ENCODE measurements at regions of chr5 and their contacts with region 1.

Region 1: DNA sequence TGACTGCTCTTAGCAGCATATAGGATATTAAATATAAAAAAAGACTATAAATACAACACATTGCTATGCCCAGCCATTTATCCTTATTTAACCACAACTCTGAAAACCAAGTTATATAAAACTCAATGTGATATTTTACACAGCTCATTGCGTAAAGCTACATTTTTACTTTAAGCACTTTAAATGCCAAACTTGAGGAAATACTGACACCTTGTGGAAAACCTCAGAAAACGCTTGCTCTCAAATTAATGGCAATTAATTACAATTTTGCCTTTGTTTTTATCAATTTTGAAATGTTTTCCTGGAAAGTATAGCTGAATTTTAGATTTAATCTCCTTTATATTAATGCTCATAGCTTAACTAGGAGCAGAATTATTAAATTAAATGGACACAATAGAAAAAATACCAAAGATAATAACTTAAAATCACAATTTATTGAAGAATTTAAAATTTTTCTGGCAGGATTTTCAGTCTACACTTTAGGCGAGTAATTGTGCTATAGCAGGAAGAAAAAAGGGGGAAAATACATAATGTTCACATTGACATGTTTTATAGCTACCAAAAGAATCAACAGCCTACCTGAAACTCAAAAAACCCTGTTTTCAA is 25.2 kb upstream of the PLAC8L1 start:
- DNase-seq: no peak
- H3K4me3 ChIP-seq: no peak overlapping the region
- H3K27ac ChIP-seq: no peak overlapping the region
- H3K4me1 ChIP-seq: no peaks in the 10 kb centered on the region
- H3K27me3 ChIP-seq: no peaks in the 10 kb centered on the region
- CTCF ChIP-seq: peak; percentile 84
- EP300 ChIP-seq: no peak
- RAD21 ChIP-seq: peak; percentile 67

Region 2: GRCh38 chr5:146118322-146118721 is 12.2 kb before region 1 on chr5:
- CTCF ChIA-PET with region 1: interaction called, 33 read pairs
- POLR2A ChIA-PET with region 1: no interaction called
- DNase-seq: no peak
- H3K4me3 ChIP-seq: no peak overlapping the region
- H3K27ac ChIP-seq: no peak overlapping the region
- H3K4me1 ChIP-seq: peaks cover 0 to 2% of the 10 kb centered on the region in 2 experiments; a peak in 2 of 4 replicates
- H3K27me3 ChIP-seq: no peaks in the 10 kb centered on the region
- CTCF ChIP-seq: no peak
- EP300 ChIP-seq: no peak
- RAD21 ChIP-seq: no peak

Region 3: GRCh38 chr5:146151970-146152369 is 21.4 kb after region 1 on chr5:
- CTCF ChIA-PET with region 1: interaction called, 12 read pairs
- POLR2A ChIA-PET with region 1: no interaction called
- DNase-seq: no peak
- H3K4me3 ChIP-seq: no peak overlapping the region
- H3K27ac ChIP-seq: no peak overlapping the region
- H3K4me1 ChIP-seq: no peaks in the 10 kb centered on the region
- H3K27me3 ChIP-seq: no peaks in the 10 kb centered on the region
- CTCF ChIP-seq: no peak
- EP300 ChIP-seq: no peak
- RAD21 ChIP-seq: no peak

Region 4: DNA sequence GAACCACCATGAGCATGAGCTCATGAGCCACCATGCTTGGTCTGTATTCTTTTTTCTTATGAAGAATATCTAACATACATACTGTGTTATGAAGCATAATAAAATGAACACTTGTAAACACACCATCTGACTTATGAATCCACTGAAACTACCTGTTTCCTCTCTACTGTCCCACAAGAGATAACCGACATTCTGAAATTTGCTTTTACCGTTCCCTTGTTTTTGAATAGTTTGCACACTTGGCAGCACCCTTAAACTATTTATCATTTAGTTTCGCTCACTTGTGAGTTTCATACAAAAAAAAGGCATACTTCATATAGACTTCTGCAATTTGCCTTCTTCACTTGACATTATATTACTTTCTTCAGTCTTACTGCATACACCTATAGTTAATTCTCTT is 43.1 kb after region 1 on chr5:
- CTCF ChIA-PET with region 1: interaction called, 15 read pairs
- POLR2A ChIA-PET with region 1: no interaction called
- DNase-seq: no peak
- H3K4me3 ChIP-seq: no peak overlapping the region
- H3K27ac ChIP-seq: no peak overlapping the region
- H3K4me1 ChIP-seq: no peaks in the 10 kb centered on the region
- H3K27me3 ChIP-seq: no peaks in the 10 kb centered on the region
- CTCF ChIP-seq: no peak
- EP300 ChIP-seq: no peak
- RAD21 ChIP-seq: no peak

Region 5: DNA sequence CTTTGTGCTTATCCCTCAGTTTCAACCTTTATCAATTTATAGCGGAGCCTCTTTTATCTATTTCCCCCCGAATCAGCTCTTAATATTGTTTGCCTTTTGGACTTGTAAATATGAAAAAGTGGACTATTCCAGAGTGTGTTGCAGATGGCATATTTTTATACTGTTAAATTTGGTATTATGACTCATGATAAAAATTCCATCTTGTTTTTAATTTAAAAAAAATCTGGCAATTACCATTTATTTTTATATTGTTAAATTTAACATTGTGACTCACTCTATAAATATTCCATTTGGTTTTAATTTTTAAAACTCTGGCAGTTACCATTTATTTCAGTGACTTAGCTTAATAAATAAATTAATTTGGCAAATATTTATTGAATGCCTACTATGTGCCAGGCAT is 110.4 kb after region 1 on chr5:
- CTCF ChIA-PET with region 1: no interaction called
- POLR2A ChIA-PET with region 1: no interaction called
- DNase-seq: no peak
- H3K4me3 ChIP-seq: no peak overlapping the region
- H3K27ac ChIP-seq: peak overlapping the region; percentile 19 to 75; a peak in 3 of 4 replicates
- H3K4me1 ChIP-seq: peaks cover 0 to 15% of the 10 kb centered on the region in 2 experiments; a peak in 2 of 4 replicates
- H3K27me3 ChIP-seq: no peaks in the 10 kb centered on the region
- CTCF ChIP-seq: no peak
- EP300 ChIP-seq: no peak
- RAD21 ChIP-seq: no peak

Measured in SK-N-SH (cell line).